HepG2 (cell line): ENCODE measurements at regions of chr6 and their contacts with region 1.

Region 1: DNA sequence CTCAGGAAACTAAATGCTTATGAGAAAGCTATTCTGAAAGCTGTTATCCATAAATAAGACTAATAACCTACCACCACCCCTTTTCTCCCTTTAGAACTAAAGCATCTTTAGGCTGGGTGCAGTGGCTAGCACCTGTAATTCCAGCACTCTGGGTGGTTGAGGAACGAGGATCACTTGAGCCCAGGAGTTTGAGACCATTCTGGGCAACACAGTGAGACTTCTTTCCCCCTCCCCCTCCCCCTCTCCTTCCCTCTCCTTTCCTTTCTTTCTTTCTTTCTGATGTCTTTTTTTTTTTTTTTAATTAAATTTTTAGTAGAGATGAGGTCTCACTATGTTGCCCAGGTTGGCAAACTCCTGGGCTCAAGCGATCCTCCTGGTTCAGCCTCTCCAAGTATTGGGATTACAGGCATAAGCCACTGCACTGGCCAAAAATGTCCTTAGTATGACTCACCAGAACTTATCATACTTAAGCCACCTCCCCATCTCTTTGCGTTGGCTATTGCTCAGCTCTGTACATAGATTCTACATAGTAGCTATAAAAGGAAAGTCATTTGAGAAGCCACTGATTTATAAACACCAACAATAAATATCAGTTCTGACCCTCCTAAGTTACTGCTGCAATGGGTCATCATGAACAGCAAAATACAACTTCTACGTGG is 54.8 kb upstream of the SPDEF start:
- DNase-seq: peak; percentile 31
- ATAC-seq: no peak
- H3K4me3 ChIP-seq: no peak overlapping the region
- H3K27ac ChIP-seq: peak overlapping the region; percentile 37
- H3K4me1 ChIP-seq: peaks cover 13% of the 10 kb centered on the region
- H3K27me3 ChIP-seq: no peaks in the 10 kb centered on the region
- CTCF ChIP-seq: no peak
- EP300 ChIP-seq: no peak
- POLR2A ChIP-seq: no peak
- RAD21 ChIP-seq: no peak

Region 2: DNA sequence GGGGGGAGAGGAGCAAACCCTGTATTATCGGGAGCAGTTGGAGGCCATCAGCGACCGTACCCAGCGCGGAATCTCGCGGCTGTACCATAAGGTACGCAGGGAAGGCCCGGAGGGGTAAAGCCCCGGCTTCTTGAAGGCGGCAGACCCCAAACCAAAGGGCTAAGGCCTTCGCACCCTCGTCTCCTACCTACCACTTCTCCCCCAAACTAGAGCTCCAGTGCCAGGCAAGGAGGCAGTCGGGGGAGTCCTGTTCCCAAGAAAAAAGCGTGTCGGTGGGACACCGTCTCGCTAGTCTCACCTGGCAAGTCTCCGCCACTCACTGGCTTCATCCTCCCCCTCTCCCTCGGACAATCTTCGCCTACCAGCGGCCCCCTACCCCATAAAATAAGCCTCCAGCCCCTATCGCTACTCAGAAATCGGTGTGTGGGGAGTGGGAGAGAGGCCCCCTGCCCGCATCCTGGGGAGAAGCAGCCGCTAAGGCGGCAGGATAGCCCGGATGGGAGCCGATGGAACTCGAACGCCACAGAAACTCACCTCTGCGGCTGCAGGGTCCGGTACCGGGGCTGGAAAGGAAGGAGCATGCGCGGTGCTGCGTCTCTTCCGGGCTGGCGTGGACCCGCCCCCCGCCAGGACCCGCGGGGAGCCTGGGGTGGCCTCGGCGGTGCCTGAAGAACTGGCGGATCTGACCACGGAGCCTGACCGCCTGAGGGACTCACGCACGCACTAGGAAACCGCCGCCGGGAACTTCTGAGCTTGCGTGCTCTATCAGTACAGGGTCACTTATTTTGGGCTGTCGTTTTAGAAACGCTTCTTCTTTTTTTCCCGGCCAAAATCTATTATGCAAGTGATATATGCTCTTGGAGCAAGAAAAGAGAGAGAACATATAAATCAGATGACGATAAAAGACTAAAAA is 185.2 kb before region 1 on chr6 and contains the start of gene RPS10:
- CTCF ChIA-PET with region 1: no interaction called
- POLR2A ChIA-PET with region 1: interaction called, 7 read pairs
- in situ Hi-C with region 1: no loop called
- intact Hi-C with region 1: loop called (anchors 2 kb)
- DNase-seq: peak; percentile 90
- ATAC-seq: peak; percentile 93
- H3K4me3 ChIP-seq: peak within 1 kb of the TSS; percentile 74 to 98 (median 89)
- H3K27ac ChIP-seq: peak within 1 kb of the TSS; percentile 73
- H3K4me1 ChIP-seq: peaks cover 58% of the 10 kb centered on the region
- H3K27me3 ChIP-seq: peaks cover 0 to 2% of the 10 kb centered on the region in 2 experiments; a peak in 1 of 5 replicates
- CTCF ChIP-seq: peak; percentile 52
- EP300 ChIP-seq: 0 out of 4 replicates have a peak, but pooled peaks of 1 of the 2 experiments have one; percentile 38
- POLR2A ChIP-seq: peak; percentile 97 to 98
- RAD21 ChIP-seq: peak; percentile 56
- total RNA-seq, gene RPS10: 2,909 and 3,503 TPM in 2 replicates

Region 3: GRCh38 chr6:34526992-34527728 is 83.8 kb before region 1 on chr6:
- CTCF ChIA-PET with region 1: interaction called, 43 read pairs
- POLR2A ChIA-PET with region 1: no interaction called
- in situ Hi-C with region 1: no loop called
- intact Hi-C with region 1: loop called (anchors 1 kb)
- DNase-seq: peak; percentile 86
- ATAC-seq: peak; percentile 90
- H3K4me3 ChIP-seq: peak overlapping the region; percentile 37 to 70 (median 42)
- H3K27ac ChIP-seq: no peak overlapping the region
- H3K4me1 ChIP-seq: peaks cover 36% of the 10 kb centered on the region
- H3K27me3 ChIP-seq: peaks cover 10 to 54% of the 10 kb centered on the region in 2 experiments; a peak in 4 of 5 replicates
- CTCF ChIP-seq: peak; percentile 98
- EP300 ChIP-seq: no peak
- POLR2A ChIP-seq: no peak
- RAD21 ChIP-seq: peak; percentile 94